H1 (cell line): ENCODE measurements at regions of chr3 and their contacts with region 1.

Region 1: GRCh38 chr3:128787256-128788240 is 61.6 kb downstream of the RAB7A start:
- DNase-seq: peak in 1 of 2 experiments; percentile 62
- H3K4me3 ChIP-seq: no peak overlapping the region
- H3K27ac ChIP-seq: no peak overlapping the region
- H3K4me1 ChIP-seq: peaks cover 0 to 11% (median 10%) of the 10 kb centered on the region in 4 experiments; a peak in 3 of 7 replicates
- H3K27me3 ChIP-seq: no peaks in the 10 kb centered on the region
- CTCF ChIP-seq: peak; percentile 42 to 68 (median 53)
- EP300 ChIP-seq: no peak
- POLR2A ChIP-seq: no peak
- RAD21 ChIP-seq: peak; percentile 27 to 37; a peak in 3 of 4 replicates

Region 2: DNA sequence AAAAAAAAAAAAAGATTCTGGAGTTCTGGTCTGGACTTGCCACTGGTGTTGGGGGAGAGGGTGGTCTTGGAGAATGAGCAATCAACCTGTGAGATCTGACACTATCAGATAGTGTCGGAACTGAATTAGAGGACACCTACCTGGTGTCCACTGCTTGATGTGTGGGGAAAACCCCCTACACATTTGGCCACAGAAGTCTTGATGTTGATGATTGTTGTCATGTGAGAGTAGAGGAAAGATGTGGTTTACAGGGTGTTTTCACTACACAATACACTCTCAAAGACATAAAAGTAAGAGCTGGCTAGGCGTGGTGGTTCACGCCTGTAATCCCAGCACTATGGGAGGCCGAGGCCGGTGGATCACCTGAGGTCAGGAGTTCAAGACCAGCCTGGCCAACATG is 98.5 kb before region 1 on chr3:
- CTCF ChIA-PET with region 1: interaction called, 24 read pairs
- POLR2A ChIA-PET with region 1: no interaction called
- DNase-seq: no peak
- H3K4me3 ChIP-seq: no peak overlapping the region
- H3K27ac ChIP-seq: no peak overlapping the region
- H3K4me1 ChIP-seq: no peaks in the 10 kb centered on the region
- H3K27me3 ChIP-seq: no peaks in the 10 kb centered on the region
- CTCF ChIP-seq: no peak
- EP300 ChIP-seq: no peak
- POLR2A ChIP-seq: no peak
- RAD21 ChIP-seq: no peak

Region 3: DNA sequence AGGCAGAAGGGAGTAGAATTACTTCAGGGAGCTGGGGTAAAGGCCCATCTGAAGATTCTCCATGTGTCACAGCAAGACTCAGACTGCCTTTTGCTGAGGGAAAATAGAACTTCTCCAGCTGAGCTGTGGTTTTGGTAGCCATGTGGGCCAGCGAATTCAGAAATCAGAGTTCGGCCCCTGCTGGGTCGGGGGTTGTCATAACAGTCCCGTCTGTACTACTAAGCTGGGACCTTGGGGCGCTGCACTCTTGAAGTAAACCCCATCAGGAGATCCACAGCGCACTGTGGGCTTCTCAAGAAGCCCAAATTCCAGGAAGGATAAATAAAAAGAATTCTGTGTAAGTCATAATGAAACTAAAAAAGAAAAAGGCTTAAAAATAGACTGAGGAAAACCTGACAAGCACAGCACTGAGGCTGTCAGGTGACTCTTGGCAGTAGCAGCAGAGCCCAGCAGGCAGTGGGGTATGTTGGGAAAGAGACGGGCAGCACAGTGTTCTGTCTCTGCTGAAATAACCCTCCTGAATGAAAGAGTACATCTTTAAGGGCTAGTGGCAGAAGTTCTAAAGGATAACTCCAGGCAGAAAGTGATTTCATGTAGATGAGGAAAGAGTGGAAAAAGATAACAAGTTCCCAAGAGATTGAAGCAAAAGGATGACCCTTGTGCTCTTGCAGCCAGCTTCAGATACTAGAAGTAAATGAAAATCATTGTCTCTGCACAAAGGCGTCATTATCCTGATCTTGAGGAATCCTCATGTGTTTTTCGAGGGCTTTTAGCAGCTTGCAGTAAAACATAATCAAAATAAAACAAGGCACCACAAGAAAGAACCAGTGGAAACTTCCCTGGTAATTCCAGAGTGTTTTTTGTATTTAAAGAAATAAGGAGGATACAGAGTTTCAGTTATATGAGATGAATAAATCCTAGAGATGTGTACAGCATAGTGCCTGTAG is 13.0 kb after region 1 on chr3:
- CTCF ChIA-PET with region 1: interaction called, 42 read pairs
- POLR2A ChIA-PET with region 1: no interaction called
- DNase-seq: no peak
- H3K4me3 ChIP-seq: no peak overlapping the region
- H3K27ac ChIP-seq: no peak overlapping the region
- H3K4me1 ChIP-seq: peaks cover 0 to 2% (median 0%) of the 10 kb centered on the region in 4 experiments; a peak in 3 of 7 replicates
- H3K27me3 ChIP-seq: no peaks in the 10 kb centered on the region
- CTCF ChIP-seq: no peak
- EP300 ChIP-seq: no peak
- POLR2A ChIP-seq: no peak
- RAD21 ChIP-seq: no peak